ENCODE measurements at regions of chr7 and their contacts with region 1.

Region 1: DNA sequence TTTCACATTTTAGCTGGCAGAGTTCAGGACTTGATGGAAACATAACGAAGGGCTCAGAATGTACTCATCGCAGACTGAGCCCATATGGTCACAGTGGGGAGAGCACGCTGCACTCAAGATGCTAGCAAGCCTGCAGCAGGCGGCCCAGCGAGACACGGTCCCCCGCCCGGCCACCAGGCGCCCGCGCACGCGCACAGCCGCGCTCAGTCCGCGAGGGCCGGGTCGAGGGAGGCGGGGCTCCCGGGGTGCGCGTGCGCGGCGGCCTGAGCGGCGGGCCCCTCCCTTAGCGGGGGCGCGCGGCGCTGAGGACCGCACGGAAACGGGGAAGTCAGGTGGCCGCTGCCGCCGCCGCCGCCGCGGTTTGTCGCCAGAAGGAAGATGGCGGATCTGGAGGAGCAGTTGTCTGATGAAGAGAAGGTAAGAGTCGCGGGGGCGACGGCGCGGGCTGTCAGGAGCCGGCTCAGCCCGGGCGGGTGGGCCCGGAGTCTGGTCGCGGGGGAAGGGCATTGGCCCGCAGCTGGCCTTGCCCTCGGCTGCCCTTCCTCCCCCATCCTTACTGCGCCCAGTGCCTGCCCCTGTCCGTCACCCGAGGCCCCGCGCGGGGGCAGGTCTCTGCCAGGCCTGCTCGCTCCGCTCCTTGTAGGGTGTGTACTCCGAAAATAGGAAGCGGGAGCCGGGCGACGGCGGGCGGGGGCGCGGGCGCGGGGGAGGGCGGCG is at the start of gene CAPZA2:
- DNase-seq: peak; percentile 99
- H3K4me3 Mint-ChIP-seq: peak within 1 kb of the TSS; percentile 100
- H3K27ac Mint-ChIP-seq: peak within 1 kb of the TSS; percentile 94
- H3K4me1 Mint-ChIP-seq: peaks cover 30% of the 10 kb centered on the region
- H3K27me3 Mint-ChIP-seq: peaks cover 10% of the 10 kb centered on the region
- total RNA-seq, gene CAPZA2: 154 and 158 TPM in 2 replicates

Region 2: GRCh38 chr7:116211006-116211912 is 651.1 kb before region 1 on chr7:
- intact Hi-C with region 1: loop called (anchors 5 kb)
- DNase-seq: peak; percentile 92
- H3K4me3 Mint-ChIP-seq: peak overlapping the region; percentile 92
- H3K27ac Mint-ChIP-seq: peak overlapping the region; percentile 94
- H3K4me1 Mint-ChIP-seq: peaks cover 42% of the 10 kb centered on the region
- H3K27me3 Mint-ChIP-seq: no peaks in the 10 kb centered on the region

Region 3: GRCh38 chr7:116802746-116803152 is 59.6 kb before region 1 on chr7:
- intact Hi-C with region 1: loop called (anchors 2 kb)
- DNase-seq: peak; percentile 76
- H3K4me3 Mint-ChIP-seq: no peak overlapping the region
- H3K27ac Mint-ChIP-seq: peak overlapping the region; percentile 55
- H3K4me1 Mint-ChIP-seq: peaks cover 8% of the 10 kb centered on the region
- H3K27me3 Mint-ChIP-seq: peaks cover 18% of the 10 kb centered on the region

Region 4: DNA sequence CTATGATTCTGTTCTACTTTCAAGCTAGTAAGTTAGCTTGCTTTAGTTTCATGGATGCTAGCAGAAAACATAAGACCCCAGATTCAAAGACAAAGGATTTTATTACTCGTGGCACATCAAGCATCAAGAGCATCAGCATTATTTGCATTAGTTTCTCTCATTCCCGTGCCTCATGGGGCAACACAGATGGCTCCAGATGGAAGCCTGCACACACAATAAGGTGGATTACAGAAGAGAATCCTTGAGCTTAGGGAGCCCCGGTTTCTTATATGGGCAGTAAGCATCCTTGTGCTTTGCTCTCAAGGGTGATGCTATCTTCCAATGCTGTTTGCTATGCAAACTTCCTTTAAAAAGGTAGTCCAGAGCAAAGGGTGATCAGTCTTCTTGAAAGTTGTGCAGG is 10.7 kb before region 1 on chr7:
- intact Hi-C with region 1: no loop called
- DNase-seq: no peak
- H3K4me3 Mint-ChIP-seq: no peak overlapping the region
- H3K27ac Mint-ChIP-seq: no peak overlapping the region
- H3K4me1 Mint-ChIP-seq: peaks cover 2% of the 10 kb centered on the region
- H3K27me3 Mint-ChIP-seq: peaks cover 40% of the 10 kb centered on the region

Region 5: GRCh38 chr7:116902867-116903266 is 40.5 kb after region 1 on chr7:
- intact Hi-C with region 1: loop called (anchors 5 kb)
- DNase-seq: no peak
- H3K4me3 Mint-ChIP-seq: no peak overlapping the region
- H3K27ac Mint-ChIP-seq: no peak overlapping the region
- H3K4me1 Mint-ChIP-seq: no peaks in the 10 kb centered on the region
- H3K27me3 Mint-ChIP-seq: no peaks in the 10 kb centered on the region

Region 6: DNA sequence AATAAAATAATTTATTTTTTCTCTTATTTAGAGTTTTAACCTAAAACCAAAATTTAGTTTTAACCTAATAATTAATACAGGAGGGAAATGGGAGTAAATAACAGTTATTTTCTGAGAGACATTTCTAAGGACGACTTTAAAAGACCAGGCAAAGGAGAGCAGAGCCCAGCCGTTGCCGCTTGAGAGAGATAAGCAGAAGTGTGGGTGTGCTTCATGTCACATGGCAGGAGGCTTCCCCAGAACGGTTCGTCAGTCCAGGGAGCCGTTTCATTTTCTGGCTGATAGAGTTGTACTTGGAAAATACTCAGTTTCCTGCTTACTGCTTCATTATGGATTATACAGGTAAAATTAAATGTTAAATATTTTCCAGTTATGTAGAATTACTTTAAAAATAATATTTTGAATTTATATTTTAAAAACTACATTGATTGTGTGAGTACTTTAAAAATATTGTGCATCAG is 152.3 kb after region 1 on chr7:
- intact Hi-C with region 1: loop called (anchors 5 kb)
- DNase-seq: no peak
- H3K4me3 Mint-ChIP-seq: no peak overlapping the region
- H3K27ac Mint-ChIP-seq: no peak overlapping the region
- H3K4me1 Mint-ChIP-seq: peaks cover 31% of the 10 kb centered on the region
- H3K27me3 Mint-ChIP-seq: peaks cover 39% of the 10 kb centered on the region

Measured in activated CD4-positive, alpha-beta T cell treated with anti-CD3 and anti-CD28 coated beads, Interleukin-2, amount 10 ng/mL, durations not matched to agents 24 days and 14 days (primary cell).